ENCODE measurements at regions of chr4 and their contacts with region 1.

Region 1: DNA sequence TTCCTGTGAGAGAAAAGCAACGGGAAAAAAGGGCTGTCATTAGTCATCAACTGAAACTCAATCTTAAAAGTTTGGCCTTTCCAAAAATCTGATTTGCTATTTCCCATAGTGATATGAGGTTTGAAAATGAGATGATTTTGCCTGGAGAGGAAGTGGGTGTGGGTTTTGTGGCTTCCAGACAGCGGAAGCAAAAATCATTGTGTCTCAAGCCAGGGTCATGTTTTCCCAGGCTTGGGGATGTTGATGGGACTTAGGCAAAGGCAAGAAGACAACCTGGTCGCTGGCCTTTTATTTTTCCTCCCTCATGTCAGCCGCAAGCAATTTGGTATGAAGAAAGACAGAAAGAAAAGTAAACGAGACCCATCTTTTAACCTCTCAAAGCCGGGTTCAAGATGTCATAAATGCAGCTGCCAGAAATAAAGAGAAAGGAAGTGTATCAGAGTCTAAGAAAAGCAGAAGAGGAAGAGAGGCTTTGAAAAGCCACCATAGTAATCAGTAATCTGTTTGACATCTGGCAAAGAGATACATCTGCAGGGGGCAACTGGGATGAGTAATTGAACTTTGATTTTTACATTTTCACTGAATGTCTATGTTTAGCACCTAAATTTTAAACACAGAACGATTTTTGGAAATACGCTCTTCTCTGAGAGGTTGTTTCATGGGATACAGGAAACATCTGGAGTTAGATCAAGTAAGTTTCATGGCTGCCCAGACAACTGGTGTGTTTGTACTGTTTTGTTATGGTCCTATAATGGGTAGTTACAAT is 521.6 kb upstream of the SLIT2 start:
- DNase-seq: peak; percentile 86
- H3K4me3 ChIP-seq: no peak overlapping the region
- H3K27ac ChIP-seq: peak overlapping the region; percentile 87
- H3K4me1 ChIP-seq: peaks cover 31% of the 10 kb centered on the region
- H3K27me3 ChIP-seq: no peaks in the 10 kb centered on the region
- CTCF ChIP-seq: no peak
- POLR2A ChIP-seq: no peak

Region 2: GRCh38 chr4:19508442-19508841 is 221.6 kb before region 1 on chr4:
- CTCF ChIA-PET with region 1: interaction called, 3 read pairs
- POLR2A ChIA-PET with region 1: no interaction called
- dilution Hi-C with region 1: no loop called
- intact Hi-C with region 1: loop called (anchors 5 kb)
- DNase-seq: peak; percentile 71
- H3K4me3 ChIP-seq: no peak overlapping the region
- H3K27ac ChIP-seq: peak overlapping the region; percentile 35
- H3K4me1 ChIP-seq: peaks cover 11% of the 10 kb centered on the region
- H3K27me3 ChIP-seq: no peaks in the 10 kb centered on the region
- CTCF ChIP-seq: no peak
- POLR2A ChIP-seq: no peak

Region 3: GRCh38 chr4:19693936-19694570 is 36.0 kb before region 1 on chr4:
- CTCF ChIA-PET with region 1: no interaction called
- POLR2A ChIA-PET with region 1: no interaction called
- dilution Hi-C with region 1: no loop called
- intact Hi-C with region 1: no loop called
- DNase-seq: peak; percentile 19
- H3K4me3 ChIP-seq: no peak overlapping the region
- H3K27ac ChIP-seq: no peak overlapping the region
- H3K4me1 ChIP-seq: no peaks in the 10 kb centered on the region
- H3K27me3 ChIP-seq: no peaks in the 10 kb centered on the region
- CTCF ChIP-seq: no peak
- POLR2A ChIP-seq: no peak

Measured in endothelial cell of umbilical vein (primary cell).